PC-3 (cell line): ENCODE measurements at regions of chr2 and their contacts with region 1.

Region 1: GRCh38 chr2:64767670-64768468 is 114.2 kb upstream of the SERTAD2 start:
- DNase-seq: peak; percentile 92
- ATAC-seq: peak; percentile 68
- H3K4me3 ChIP-seq: peak overlapping the region; percentile 70
- H3K27ac ChIP-seq: peak overlapping the region; percentile 81
- H3K4me1 ChIP-seq: peaks cover 38% of the 10 kb centered on the region
- H3K27me3 ChIP-seq: no peaks in the 10 kb centered on the region
- CTCF ChIP-seq: no peak

Region 2: DNA sequence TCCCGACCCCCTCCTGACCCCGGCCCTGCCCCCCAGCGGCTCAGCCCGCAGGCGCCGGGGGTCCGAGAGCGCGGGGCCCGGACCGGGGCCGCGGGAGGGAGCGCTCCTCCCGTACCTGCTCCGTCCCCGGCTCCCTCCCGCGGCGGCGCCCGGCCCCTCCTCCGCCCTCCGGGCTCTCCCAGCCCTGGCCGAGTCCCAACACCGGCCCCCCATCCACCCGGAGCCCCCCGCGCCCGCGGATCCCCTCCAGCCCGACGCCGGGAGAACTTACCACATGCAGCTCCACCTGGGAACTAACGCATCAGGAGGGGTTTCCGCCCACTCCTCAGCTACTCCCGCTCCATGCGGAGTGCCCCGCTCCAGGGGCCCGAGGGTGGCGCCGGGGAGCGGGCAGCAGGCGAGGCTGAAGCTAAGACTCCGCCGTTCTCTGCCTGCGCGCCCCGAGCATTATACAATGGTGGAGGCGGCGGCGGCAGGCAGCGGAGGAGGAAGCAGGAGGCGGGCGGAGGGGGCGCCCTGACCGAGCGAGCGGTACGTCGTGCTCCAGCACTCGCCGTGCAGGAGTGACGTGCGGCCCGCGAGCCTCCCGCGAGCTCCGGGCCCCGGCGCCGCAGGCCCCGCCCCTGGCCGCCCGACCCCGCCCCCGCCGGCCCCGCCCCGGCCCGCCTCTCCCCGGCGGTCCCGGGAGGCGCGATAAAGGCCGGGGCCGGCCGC is 114.4 kb before region 1 on chr2 and contains the start of gene SERTAD2:
- CTCF ChIA-PET with region 1: interaction called, 3 read pairs
- POLR2A ChIA-PET with region 1: interaction called, 3 read pairs
- intact Hi-C with region 1: loop called (anchors 1 kb)
- DNase-seq: peak; percentile 81
- ATAC-seq: peak; percentile 68
- H3K4me3 ChIP-seq: peak within 1 kb of the TSS; percentile 94
- H3K27ac ChIP-seq: peak within 1 kb of the TSS; percentile 58
- H3K4me1 ChIP-seq: peaks cover 46% of the 10 kb centered on the region
- H3K27me3 ChIP-seq: no peaks in the 10 kb centered on the region
- CTCF ChIP-seq: no peak; the same call in 1 of the 2 replicates
- total RNA-seq, gene SERTAD2: 19.8 and 34.9 TPM in 2 replicates

Region 3: DNA sequence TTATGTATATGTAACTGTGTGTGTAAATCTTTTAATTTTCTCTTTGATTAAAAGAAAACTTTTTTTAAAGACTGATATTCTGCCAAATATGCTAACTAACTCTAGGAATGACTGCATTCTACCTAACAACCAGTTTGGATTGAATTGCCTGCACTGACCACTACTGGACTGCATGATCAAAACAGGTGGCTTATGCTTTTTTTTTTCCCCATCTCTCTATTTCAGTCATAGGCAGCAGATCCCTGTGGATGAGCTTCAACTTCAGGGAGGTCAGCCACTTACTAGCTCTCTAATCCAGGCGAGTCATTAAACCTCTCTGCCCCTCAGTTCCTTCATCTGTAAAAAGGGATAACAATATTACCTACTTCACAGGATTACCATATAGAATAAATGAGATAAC is 24.4 kb after region 1 on chr2:
- CTCF ChIA-PET with region 1: interaction called, 3 read pairs
- POLR2A ChIA-PET with region 1: interaction called, 5 read pairs
- intact Hi-C with region 1: loop called (anchors 2 kb)
- DNase-seq: peak; percentile 43
- ATAC-seq: peak; percentile 12; the same call in 1 of the 2 replicates
- H3K4me3 ChIP-seq: no peak overlapping the region
- H3K27ac ChIP-seq: peak overlapping the region; percentile 86; the same call in 1 of the 2 replicates
- H3K4me1 ChIP-seq: peaks cover 51% of the 10 kb centered on the region
- H3K27me3 ChIP-seq: no peaks in the 10 kb centered on the region
- CTCF ChIP-seq: peak; percentile 50; the same call in 1 of the 2 replicates

Region 4: GRCh38 chr2:64797881-64798575 is 30.2 kb after region 1 on chr2:
- CTCF ChIA-PET with region 1: interaction called, 3 read pairs
- POLR2A ChIA-PET with region 1: interaction called, 5 read pairs
- intact Hi-C with region 1: loop called (anchors 1 kb)
- DNase-seq: peak; percentile 97
- ATAC-seq: peak; percentile 77
- H3K4me3 ChIP-seq: peak overlapping the region; percentile 13; the same call in 1 of the 2 replicates
- H3K27ac ChIP-seq: peak overlapping the region; percentile 74
- H3K4me1 ChIP-seq: peaks cover 58% of the 10 kb centered on the region
- H3K27me3 ChIP-seq: no peaks in the 10 kb centered on the region
- CTCF ChIP-seq: no peak

Region 5: GRCh38 chr2:64831134-64831976 is 63.5 kb after region 1 on chr2:
- CTCF ChIA-PET with region 1: interaction called, 3 read pairs
- POLR2A ChIA-PET with region 1: interaction called, 4 read pairs
- intact Hi-C with region 1: loop called (anchors 1 kb)
- DNase-seq: peak; percentile 99
- ATAC-seq: peak; percentile 90
- H3K4me3 ChIP-seq: peak overlapping the region; percentile 31; the same call in 1 of the 2 replicates
- H3K27ac ChIP-seq: peak overlapping the region; percentile 93
- H3K4me1 ChIP-seq: peaks cover 61% of the 10 kb centered on the region
- H3K27me3 ChIP-seq: no peaks in the 10 kb centered on the region
- CTCF ChIP-seq: peak; percentile 96

Region 6: GRCh38 chr2:64839844-64840243 is 72.0 kb after region 1 on chr2:
- CTCF ChIA-PET with region 1: no interaction called
- POLR2A ChIA-PET with region 1: interaction called, 15 read pairs
- intact Hi-C with region 1: no loop called
- DNase-seq: no peak
- ATAC-seq: no peak
- H3K4me3 ChIP-seq: no peak overlapping the region
- H3K27ac ChIP-seq: peak overlapping the region; percentile 86; the same call in 1 of the 2 replicates
- H3K4me1 ChIP-seq: peaks cover 57% of the 10 kb centered on the region
- H3K27me3 ChIP-seq: no peaks in the 10 kb centered on the region
- CTCF ChIP-seq: no peak

Region 7: DNA sequence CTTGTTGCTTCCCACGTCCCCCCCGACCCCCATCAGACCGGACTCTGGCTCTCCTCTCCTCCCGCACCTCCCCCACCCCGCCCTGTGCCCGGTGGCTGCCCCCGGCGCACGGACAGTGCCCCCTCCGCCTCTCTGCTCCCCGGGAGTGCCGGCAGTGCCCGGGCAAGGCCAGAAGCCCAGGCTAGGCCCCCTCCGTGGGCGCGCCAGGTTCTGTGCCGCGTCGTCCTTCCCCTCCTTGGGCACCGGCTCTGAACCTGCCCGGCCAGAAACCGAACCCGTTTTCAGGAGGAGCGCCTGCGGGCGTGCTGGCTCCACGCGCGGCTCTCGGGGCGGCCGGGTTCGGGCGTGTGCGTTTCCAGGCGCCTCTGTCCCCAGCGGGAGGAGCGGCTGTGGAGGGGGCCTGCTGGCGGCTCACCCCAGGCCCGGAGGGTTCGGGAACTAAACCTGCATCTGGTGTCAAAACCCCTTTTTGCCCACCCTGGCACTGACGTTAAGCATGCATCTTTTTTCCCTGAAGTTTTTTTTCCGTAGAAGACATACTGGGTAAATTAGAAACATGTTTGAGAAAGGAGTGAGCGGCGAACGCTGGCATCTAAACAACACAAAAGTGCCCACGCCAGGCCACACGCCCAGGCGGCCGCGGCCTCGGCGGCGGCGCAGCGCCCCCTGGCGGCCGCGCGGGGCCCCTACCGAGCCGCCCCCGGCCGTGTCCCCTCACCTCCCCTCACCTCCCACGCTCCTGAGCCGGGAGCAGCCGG is 97.4 kb after region 1 on chr2:
- CTCF ChIA-PET with region 1: no interaction called
- POLR2A ChIA-PET with region 1: interaction called, 27 read pairs
- intact Hi-C with region 1: loop called (anchors 1 kb)
- DNase-seq: peak; percentile 73
- ATAC-seq: peak; percentile 82
- H3K4me3 ChIP-seq: peak overlapping the region; percentile 68
- H3K27ac ChIP-seq: peak overlapping the region; percentile 81
- H3K4me1 ChIP-seq: peaks cover 35% of the 10 kb centered on the region
- H3K27me3 ChIP-seq: no peaks in the 10 kb centered on the region
- CTCF ChIP-seq: peak; percentile 68

Region 8: DNA sequence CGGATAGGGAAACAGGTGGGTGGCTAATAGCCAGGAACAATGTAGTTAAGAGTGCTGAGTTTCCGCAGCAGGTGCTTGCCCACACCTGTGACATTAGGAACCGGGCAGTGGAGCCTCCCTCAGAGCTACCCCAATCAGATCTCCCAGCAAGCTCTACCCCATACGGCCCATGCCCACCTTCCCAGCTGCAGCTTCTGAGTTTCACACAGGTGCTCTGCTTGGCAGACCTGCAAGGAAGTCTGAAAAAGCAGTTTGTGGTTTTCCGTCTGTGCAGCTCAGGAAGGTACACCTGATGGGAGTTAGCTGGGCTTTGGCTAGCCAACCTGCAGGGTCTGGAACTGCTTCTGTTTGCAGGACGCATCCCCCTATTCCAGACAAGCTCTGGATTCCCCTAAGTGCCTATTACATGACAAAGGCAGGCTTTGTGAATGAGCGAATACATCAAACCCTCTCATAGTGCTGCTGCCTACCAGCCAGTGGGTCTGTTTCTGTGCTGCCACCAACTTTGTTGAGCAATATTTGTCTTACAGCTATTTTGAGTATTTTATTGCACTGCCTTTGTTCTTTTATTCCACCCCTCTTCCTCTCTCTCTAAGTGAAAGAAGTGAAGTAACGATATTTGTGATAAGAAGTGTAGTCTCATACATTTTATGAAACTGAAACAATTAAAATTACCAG is 263.6 kb after region 1 on chr2:
- CTCF ChIA-PET with region 1: no interaction called
- POLR2A ChIA-PET with region 1: no interaction called
- intact Hi-C with region 1: no loop called
- DNase-seq: peak; percentile 57
- ATAC-seq: peak; percentile 79
- H3K4me3 ChIP-seq: peak overlapping the region; percentile 34; the same call in 1 of the 2 replicates
- H3K27ac ChIP-seq: peak overlapping the region; percentile 8; the same call in 1 of the 2 replicates
- H3K4me1 ChIP-seq: peaks cover 17% of the 10 kb centered on the region
- H3K27me3 ChIP-seq: no peaks in the 10 kb centered on the region
- CTCF ChIP-seq: no peak